Keratinocyte (primary cell): ENCODE measurements at regions of chr16 and their contacts with region 1.

Region 1: GRCh38 chr16:24070851-24071250 is 185.3 kb upstream of the CACNG3 start:
- DNase-seq: no peak
- H3K4me3 ChIP-seq: no peak overlapping the region
- H3K27ac ChIP-seq: no peak overlapping the region
- H3K4me1 ChIP-seq: no peaks in the 10 kb centered on the region
- H3K27me3 ChIP-seq: no peaks in the 10 kb centered on the region
- CTCF ChIP-seq: peak; percentile 38 to 74 (median 67)

Region 2: GRCh38 chr16:24146523-24146922 is 75.7 kb after region 1 on chr16:
- dilution Hi-C with region 1: loop called (anchors 10 kb)
- DNase-seq: no peak
- H3K4me3 ChIP-seq: no peak overlapping the region
- H3K27ac ChIP-seq: no peak overlapping the region
- H3K4me1 ChIP-seq: no peaks in the 10 kb centered on the region
- H3K27me3 ChIP-seq: no peaks in the 10 kb centered on the region
- CTCF ChIP-seq: no peak

Region 3: DNA sequence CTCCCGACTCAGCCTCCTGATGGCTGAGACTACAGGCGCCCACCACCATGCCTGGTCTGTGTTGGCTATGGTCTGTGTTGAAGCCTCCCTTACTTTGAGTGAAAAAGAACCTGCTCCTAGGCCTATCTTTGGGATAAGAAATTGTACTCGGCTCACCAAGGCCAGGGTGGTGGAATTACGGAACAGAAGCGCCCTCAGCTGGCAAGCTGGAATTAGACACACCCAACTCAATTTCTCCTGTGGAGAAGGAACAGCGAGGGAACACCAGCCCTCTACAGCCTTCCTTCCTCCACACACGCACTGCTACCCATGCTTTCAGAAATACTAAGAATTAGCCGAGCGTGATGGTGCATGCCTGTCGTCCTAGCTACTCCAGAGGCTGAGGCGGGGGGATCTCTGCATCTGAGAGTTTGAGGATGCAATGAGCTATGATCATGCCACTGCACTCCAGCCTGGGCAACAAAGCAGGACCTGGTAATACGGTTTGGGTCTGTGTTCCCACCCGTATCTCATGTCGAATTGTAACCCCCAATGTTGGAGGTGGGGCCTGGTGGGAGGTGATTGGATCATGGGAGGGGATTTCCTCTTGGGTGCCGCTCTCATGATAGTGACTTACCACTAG is 428.5 kb after region 1 on chr16:
- dilution Hi-C with region 1: loop called (anchors 25 kb)
- DNase-seq: no peak
- H3K4me3 ChIP-seq: no peak overlapping the region
- H3K27ac ChIP-seq: no peak overlapping the region
- H3K4me1 ChIP-seq: no peaks in the 10 kb centered on the region
- H3K27me3 ChIP-seq: no peaks in the 10 kb centered on the region
- CTCF ChIP-seq: peak; percentile 48 to 76 (median 75)